T-cell (primary cell): ENCODE measurements at regions of chr14 and their contacts with region 1.

Region 1: GRCh38 chr14:104826189-104826860 is 25.4 kb downstream of the ZBTB42 start:
- DNase-seq: peak; percentile 77 to 98 (median 90)
- ATAC-seq: peak; percentile 90 to 95 (median 94)
- H3K4me3 ChIP-seq: peak overlapping the region; percentile 69 to 73
- H3K4me3 Mint-ChIP-seq: peak overlapping the region; percentile 79 to 94 (median 83)
- H3K27ac ChIP-seq: no peak overlapping the region
- H3K27ac Mint-ChIP-seq: no peak overlapping the region
- H3K4me1 ChIP-seq: peaks cover 0 to 24% of the 10 kb centered on the region in 2 experiments
- H3K4me1 Mint-ChIP-seq: peaks cover 20 to 27% (median 25%) of the 10 kb centered on the region in 3 donors
- H3K27me3 ChIP-seq: peaks cover 0 to 29% of the 10 kb centered on the region in 2 experiments
- H3K27me3 Mint-ChIP-seq: peaks cover 0 to 15% of the 10 kb centered on the region in 2 donors

Region 2: DNA sequence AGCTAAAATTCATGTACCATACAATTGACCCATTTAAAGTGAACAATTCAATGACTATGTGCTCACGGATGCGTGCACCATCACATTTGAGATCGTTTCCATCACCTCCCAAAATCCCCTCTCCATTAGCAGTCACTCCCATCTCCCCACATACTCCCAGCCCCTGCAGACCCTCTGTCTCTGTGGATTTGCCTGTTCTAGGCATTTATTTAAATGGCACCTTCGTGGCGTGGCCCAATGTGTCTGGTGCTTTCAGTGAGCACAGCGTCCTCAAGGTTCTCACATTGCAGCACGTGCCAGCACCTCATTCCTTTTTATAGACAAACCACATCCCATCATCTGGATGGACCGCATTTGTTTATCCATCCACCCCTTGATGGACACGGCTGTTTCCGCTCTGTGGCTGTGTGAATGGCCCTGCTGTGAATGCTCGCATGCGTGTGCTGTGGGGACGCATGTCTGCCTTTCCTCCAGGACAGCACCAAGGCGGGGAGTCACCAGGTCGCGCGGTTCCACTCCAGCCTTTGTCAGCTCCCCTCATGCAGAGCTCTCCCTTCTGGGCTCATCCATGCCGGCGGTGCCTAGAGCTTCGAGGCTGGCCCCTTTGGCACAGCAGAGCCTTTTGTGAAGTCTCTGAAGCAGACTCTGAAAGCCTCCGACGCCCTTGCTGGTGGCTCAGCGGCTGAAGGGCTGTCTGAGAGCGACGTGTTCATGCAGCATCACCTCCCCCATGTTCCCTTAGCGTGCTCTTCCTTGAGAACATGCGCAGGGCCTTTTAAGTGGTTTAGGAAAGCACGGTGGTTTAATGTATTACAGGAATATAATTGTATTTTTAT is 503.6 kb before region 1 on chr14:
- CTCF ChIA-PET with region 1: no interaction called
- POLR2A ChIA-PET with region 1: no interaction called
- DNase-seq: peak in 1 of 35 experiments; percentile 10
- ATAC-seq: no peak
- H3K4me3 ChIP-seq: no peak overlapping the region
- H3K4me3 Mint-ChIP-seq: no peak overlapping the region
- H3K27ac ChIP-seq: no peak overlapping the region
- H3K27ac Mint-ChIP-seq: no peak overlapping the region
- H3K4me1 ChIP-seq: peaks cover 0 to 5% of the 10 kb centered on the region in 2 experiments
- H3K4me1 Mint-ChIP-seq: no peaks in the 10 kb centered on the region
- H3K27me3 ChIP-seq: peaks cover 0 to 29% of the 10 kb centered on the region in 2 experiments
- H3K27me3 Mint-ChIP-seq: peaks cover 6 to 11% of the 10 kb centered on the region in 2 donors

Region 3: GRCh38 chr14:104752735-104753531 is 73.4 kb before region 1 on chr14 and contains the start of gene SIVA1:
- CTCF ChIA-PET with region 1: interaction called in 1 of 2 experiments, 11 read pairs
- POLR2A ChIA-PET with region 1: no interaction called
- DNase-seq: peak; percentile 97 to 100 (median 99)
- ATAC-seq: peak; percentile 89 to 92 (median 92)
- H3K4me3 ChIP-seq: peak within 1 kb of the TSS; percentile 76 to 86
- H3K4me3 Mint-ChIP-seq: peak within 1 kb of the TSS; percentile 88 to 93 (median 90)
- H3K27ac ChIP-seq: peak within 1 kb of the TSS; percentile 70
- H3K27ac Mint-ChIP-seq: peak within 1 kb of the TSS; percentile 84 to 93
- H3K4me1 ChIP-seq: peaks cover 10 to 49% of the 10 kb centered on the region in 2 experiments
- H3K4me1 Mint-ChIP-seq: peaks cover 39 to 45% (median 40%) of the 10 kb centered on the region in 3 donors
- H3K27me3 ChIP-seq: peaks cover 0 to 7% of the 10 kb centered on the region in 2 experiments
- H3K27me3 Mint-ChIP-seq: no peaks in the 10 kb centered on the region
- total RNA-seq, gene SIVA1: 62.3 to 93.5 (median 79.5) TPM

Region 4: DNA sequence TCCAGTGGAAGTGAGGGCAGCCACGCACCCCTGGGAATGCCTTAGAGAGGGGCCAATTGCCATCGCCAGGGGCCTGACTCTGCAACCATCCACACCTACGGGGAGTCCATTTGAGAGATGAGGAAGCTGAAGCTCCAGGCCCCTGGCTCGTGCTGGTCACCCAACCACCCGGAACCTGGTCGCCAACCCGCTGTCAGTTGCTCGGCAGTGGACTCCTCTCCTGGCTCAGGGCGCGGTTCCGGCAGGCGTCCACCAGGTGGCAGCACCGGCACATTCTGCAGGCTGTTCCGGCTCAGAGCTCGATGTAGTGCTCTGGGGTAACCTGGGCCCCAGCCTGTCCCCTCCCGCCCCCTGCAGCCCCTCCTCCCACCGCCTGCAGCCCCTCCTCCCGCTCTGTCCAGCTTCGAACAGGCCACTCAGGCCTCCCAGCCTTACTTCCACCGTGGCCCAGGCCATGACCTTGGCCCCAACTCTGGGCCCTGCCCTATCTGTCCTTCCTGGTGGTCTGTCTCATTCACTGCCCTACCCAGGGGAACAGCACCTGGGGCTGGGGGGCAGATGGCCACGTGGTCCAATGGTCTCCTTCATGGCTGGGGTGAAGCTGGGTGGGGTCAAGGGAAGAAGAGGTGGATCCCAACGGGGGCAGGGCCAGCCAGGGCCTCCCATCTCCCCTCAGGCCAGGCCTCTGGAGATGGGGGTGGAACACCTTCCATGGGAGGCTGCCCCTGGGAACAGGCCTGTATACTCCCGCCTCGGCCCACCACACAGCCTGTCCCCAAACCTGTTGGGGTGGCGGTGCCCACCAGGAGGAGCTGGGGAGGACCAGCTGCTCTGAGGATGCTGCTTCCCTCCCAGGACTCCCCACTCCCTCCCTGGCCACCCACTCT is 57.6 kb before region 1 on chr14:
- CTCF ChIA-PET with region 1: interaction called, 7 to 11 read pairs
- POLR2A ChIA-PET with region 1: no interaction called
- DNase-seq: peak; percentile 66 to 95 (median 86)
- ATAC-seq: peak; percentile 91 to 96 (median 94)
- H3K4me3 ChIP-seq: no peak overlapping the region
- H3K4me3 Mint-ChIP-seq: no peak overlapping the region
- H3K27ac ChIP-seq: peak overlapping the region; percentile 35
- H3K27ac Mint-ChIP-seq: no peak overlapping the region
- H3K4me1 ChIP-seq: peaks cover 0 to 8% of the 10 kb centered on the region in 2 experiments
- H3K4me1 Mint-ChIP-seq: peaks cover 0 to 10% (median 0%) of the 10 kb centered on the region in 3 donors
- H3K27me3 ChIP-seq: no peaks in the 10 kb centered on the region
- H3K27me3 Mint-ChIP-seq: no peaks in the 10 kb centered on the region